ENCODE measurements at regions of chr12 and their contacts with region 1.

Region 1: GRCh38 chr12:124369055-124369900 is 74.4 kb downstream of the RFLNA start:
- DNase-seq: peak; percentile 93

Region 2: GRCh38 chr12:124248941-124249825 is 120.1 kb before region 1 on chr12:
- intact Hi-C with region 1: no loop called
- DNase-seq: no peak

Region 3: GRCh38 chr12:124279846-124280360 is 89.4 kb before region 1 on chr12:
- intact Hi-C with region 1: no loop called
- DNase-seq: no peak

Region 4: GRCh38 chr12:124294780-124295241 is 74.5 kb before region 1 on chr12 and contains the start of gene RFLNA:
- intact Hi-C with region 1: no loop called
- DNase-seq: no peak
- total RNA-seq, gene RFLNA: not detected

Region 5: DNA sequence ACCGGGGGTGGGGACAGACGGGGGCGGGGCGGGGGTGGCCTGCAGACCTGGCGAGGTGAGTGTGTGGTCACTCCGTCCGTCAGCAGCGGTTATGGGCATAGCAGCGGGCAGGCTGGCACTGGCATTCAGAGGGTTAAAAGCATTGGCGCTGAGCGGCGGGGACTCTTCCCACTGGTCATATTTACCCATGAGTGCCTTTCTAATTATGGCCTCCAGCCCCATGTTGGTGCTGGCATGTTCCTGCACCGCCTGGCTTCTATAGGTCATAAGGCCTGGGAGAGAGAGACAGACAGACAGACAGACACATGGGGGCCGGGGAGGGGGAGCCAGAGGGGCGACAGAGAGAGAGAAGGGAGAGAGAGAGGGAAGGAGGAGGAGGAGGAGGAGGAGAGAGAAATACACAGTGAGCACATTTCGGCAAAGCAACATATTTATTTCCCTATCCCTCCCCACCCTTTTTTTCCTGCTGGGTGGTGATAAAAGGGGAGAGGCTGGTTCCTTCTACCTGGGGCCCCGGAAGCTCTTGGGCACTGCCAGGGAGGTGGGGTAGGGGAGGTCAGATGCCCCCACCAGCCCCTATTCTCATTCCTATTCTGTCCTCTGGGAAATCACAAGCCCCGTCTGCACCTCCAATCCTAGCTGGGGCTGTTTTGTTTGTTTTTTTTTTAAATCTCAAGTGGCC is 41.8 kb before region 1 on chr12:
- intact Hi-C with region 1: loop called (anchors 5 kb)
- DNase-seq: no peak

Region 6: GRCh38 chr12:124391340-124392261 is 22.3 kb after region 1 on chr12:
- intact Hi-C with region 1: loop called (anchors 2 kb)
- DNase-seq: peak; percentile 89

Region 7: DNA sequence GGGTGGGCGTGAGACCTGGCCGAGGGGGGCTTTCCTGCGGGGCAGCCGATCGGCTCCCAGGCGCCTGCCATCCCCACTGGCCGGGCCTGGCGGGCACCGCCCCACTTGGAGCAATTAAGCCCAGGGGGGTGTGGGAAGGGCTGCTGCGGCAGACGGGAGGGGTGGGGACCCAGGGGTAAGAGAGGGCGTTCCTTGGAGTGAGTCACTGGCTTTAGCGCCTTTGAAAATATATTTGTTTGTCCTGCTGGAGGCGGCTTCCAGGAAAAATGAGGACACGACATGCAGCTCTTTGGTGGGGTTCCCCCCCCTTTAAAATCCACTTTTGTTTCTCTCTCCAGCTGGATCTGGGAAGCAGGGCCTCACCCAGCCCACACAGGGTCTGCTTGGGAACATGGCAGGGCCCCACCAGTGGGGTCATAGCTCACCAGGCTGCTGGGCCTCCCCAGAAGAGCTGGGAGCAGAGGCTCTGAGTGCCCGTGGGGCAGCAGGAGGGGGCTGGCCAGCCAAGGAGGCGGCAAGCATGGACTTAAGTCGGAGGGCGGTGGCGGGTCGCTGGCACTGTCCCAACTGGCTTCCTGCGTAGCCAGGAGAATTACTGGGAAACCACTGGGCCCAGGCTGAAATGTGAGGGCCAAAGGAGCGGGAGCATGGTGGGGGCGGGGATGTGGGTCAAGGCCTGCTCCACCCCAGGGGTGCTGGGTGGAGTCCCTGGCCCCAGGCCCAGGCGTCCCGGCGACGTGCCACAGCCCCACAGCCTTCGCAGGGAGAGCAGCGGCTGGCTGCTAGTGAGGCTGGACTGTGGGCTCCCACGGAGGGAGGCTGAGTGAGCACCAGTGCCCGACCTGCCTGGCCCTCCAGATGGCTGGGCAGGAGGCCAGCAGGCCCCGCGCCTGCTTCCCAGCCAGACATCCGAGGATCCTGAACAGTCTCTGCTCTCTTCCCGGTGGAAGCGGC is 53.6 kb after region 1 on chr12:
- intact Hi-C with region 1: loop called (anchors 2 kb)
- DNase-seq: peak; percentile 93

Region 8: DNA sequence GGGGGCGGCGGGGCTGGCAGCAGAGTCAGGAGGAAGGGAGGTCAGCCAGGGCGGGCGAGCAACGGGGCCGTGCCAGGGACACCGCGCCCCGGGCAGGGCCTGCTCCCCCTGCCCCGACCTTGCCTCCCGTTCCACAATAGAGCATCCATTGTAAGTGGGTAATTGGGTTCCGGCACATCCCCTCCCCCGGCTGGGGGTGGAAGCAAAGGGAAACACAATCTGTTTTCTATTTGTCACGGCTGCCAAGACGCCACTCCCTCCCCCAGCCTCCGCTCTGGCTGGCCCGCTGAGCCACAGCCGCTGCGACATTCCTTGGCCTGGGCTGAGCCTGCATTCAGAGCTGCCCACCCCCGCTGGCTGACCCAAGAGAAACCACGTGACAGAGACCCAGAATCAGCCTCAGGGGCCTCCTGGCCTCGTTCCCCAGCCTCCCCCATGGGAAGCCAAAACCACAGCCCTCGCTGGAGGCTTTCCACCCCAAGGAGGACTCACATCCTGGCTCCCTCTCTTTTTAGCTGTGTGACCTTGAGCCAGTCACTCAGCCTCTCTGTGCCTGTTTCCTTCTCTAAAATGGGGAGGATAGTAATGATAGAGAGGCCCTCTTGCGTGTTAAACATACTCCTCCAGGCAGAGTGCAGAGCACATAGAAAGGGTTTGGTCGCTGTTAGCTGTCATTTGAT is 376.8 kb after region 1 on chr12:
- intact Hi-C with region 1: loop called (anchors 5 kb)
- DNase-seq: peak; percentile 95